ENCODE measurements at regions of chr9 and their contacts with region 1.

Region 1: GRCh38 chr9:613771-614347 is 227.6 kb upstream of the DMRT1 start:
- DNase-seq: peak; percentile 71 to 90 (median 83)
- H3K4me3 ChIP-seq: no peak overlapping the region
- H3K27ac ChIP-seq: peak overlapping the region in 1 of 5 donors; percentile 30
- H3K4me1 ChIP-seq: peaks cover 4 to 6% of the 10 kb centered on the region in 2 donors
- H3K27me3 ChIP-seq: no peaks in the 10 kb centered on the region
- CTCF ChIP-seq: peak; percentile 45 to 98 (median 79)
- POLR2A ChIP-seq: no peak

Region 2: DNA sequence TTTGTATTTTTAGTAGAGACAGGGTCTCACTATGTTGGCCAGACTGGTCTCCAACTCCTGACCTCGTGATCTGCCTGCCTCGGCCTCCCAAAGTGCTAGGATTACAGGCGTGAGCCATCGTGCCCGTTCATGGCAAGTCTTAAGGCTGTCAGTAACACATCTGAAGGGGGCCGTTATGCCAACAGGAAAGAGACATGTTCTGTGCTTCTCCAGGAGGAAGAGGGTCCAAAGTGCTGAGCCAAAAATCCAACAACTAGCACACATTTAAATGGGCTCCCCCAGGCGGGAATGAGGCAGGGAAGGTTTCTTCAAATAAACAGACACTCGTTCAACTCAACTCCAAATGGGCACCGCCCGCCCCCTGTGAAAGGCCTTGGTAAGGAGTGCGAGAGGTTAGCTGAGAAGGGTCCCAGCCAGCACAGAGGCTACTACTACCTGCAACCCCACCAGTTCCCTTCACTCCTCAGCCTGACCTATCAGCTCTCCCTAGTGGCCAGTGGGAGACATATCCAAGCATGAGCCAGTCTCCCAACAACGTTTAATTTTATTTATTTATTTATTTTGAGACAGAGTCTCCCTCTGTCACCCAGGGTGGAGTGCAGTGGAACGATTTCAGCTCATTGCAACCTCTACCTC is 143.5 kb after region 1 on chr9:
- intact Hi-C with region 1: loop called in 1 of 2 experiments (anchors 5 kb)
- DNase-seq: peak in 6 of 7 donors; percentile 22 to 55 (median 41)
- H3K4me3 ChIP-seq: no peak overlapping the region
- H3K27ac ChIP-seq: no peak overlapping the region
- H3K4me1 ChIP-seq: peaks cover 0 to 5% of the 10 kb centered on the region in 2 donors
- H3K27me3 ChIP-seq: no peaks in the 10 kb centered on the region
- CTCF ChIP-seq: peak; percentile 19 to 65 (median 56)
- POLR2A ChIP-seq: no peak

Region 3: GRCh38 chr9:806285-807156 is 192.7 kb after region 1 on chr9:
- intact Hi-C with region 1: loop called (anchors 5 kb)
- DNase-seq: peak in 2 of 7 donors; percentile 23 to 25
- H3K4me3 ChIP-seq: no peak overlapping the region
- H3K27ac ChIP-seq: no peak overlapping the region
- H3K4me1 ChIP-seq: no peaks in the 10 kb centered on the region
- H3K27me3 ChIP-seq: no peaks in the 10 kb centered on the region
- CTCF ChIP-seq: peak; percentile 44 to 95 (median 68)
- POLR2A ChIP-seq: no peak

Region 4: DNA sequence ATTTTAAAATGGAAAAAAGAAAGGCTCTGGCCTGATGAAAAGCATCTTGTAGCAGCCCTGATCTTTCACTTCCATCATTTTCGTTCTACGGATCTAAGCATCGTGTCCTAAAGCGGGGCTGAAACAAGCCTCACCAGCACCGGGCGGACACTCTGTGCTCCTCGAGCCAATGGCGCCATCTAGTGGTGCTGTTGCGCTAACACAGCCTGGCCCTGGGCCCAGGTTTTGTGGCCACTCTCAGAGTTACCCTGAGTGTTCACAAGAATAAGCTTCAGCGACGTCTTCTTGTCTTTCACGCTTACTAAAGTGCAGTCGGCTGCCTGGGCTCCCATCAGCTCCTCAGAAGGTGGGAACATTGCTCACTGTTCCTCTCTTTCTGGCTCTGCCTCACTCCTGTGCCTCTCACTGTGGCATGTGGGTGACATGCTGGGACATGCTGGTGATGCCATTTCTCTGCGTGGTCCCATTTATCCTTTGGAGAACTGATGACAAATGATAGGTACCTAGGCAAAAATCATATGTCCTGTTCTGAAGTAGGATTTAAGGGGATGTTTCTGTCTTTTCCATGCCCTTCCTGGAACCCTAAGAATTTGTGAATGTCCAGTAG is 395.3 kb after region 1 on chr9:
- intact Hi-C with region 1: loop called in 1 of 2 experiments (anchors 10 kb)
- DNase-seq: peak; percentile 64 to 92 (median 83)
- H3K4me3 ChIP-seq: no peak overlapping the region
- H3K27ac ChIP-seq: no peak overlapping the region
- H3K4me1 ChIP-seq: no peaks in the 10 kb centered on the region
- H3K27me3 ChIP-seq: peaks cover 22% of the 10 kb centered on the region
- CTCF ChIP-seq: peak; percentile 91 to 98 (median 94)
- POLR2A ChIP-seq: no peak